H1 (cell line): ENCODE measurements at regions of chr17 and their contacts with region 1.

Region 1: GRCh38 chr17:7403977-7404736 is at the start of gene TMEM256:
- DNase-seq: peak; percentile 96 to 99
- H3K4me3 ChIP-seq: peak within 1 kb of the TSS; percentile 72 to 94 (median 81)
- H3K27ac ChIP-seq: peak within 1 kb of the TSS; percentile 81; the same call in 1 of the 2 replicates
- H3K4me1 ChIP-seq: peaks cover 0 to 15% (median 11%) of the 10 kb centered on the region in 4 experiments; a peak in 5 of 7 replicates
- H3K27me3 ChIP-seq: no peaks in the 10 kb centered on the region; a peak in 1 of 7 replicates
- CTCF ChIP-seq: no peak
- EP300 ChIP-seq: no peak
- POLR2A ChIP-seq: peak in 1 of 2 experiments; percentile 74; a peak in 2 of 3 replicates
- RAD21 ChIP-seq: no peak
- total RNA-seq, gene TMEM256: 97.0 and 104 TPM in 2 replicates

Region 2: DNA sequence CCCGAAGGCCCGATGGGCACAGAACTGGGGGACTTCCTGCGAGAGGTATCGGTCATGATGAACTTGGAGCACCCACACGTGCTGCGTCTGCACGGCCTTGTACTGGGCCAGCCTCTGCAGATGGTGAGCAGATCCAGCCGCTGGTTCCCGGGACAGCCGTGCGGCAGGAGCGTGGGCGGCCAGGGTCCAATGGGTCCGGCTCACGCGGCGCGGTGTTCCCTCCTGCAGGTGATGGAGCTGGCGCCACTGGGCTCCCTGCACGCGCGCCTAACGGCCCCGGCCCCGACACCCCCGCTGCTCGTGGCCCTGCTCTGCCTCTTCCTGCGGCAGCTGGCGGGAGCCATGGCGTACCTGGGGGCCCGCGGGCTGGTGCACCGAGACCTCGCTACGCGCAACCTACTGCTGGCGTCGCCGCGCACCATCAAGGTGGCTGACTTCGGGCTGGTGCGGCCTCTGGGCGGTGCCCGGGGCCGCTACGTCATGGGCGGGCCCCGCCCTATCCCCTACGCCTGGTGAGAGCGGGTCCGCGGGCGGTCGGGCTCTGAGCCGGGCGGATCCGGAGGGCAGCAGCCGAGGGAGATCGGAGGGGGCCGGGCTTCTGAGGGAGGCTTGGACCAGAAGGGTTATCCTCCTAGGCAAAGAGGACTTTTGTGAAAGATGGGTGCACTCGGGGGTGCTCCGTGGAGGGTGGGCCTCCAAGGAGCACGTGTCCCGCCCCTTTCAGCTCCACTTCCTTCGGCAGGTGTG is 20.2 kb before region 1 on chr17:
- CTCF ChIA-PET with region 1: interaction called, 4 read pairs
- POLR2A ChIA-PET with region 1: interaction called, 12 read pairs
- DNase-seq: peak in 1 of 2 experiments; percentile 92
- H3K4me3 ChIP-seq: peak overlapping the region; percentile 36 to 60 (median 46)
- H3K27ac ChIP-seq: no peak overlapping the region
- H3K4me1 ChIP-seq: peaks cover 0 to 17% (median 10%) of the 10 kb centered on the region in 4 experiments; a peak in 6 of 7 replicates
- H3K27me3 ChIP-seq: peaks cover 0 to 39% (median 29%) of the 10 kb centered on the region in 4 experiments; a peak in 6 of 7 replicates
- CTCF ChIP-seq: no peak
- EP300 ChIP-seq: no peak
- POLR2A ChIP-seq: peak in 1 of 2 experiments; percentile 28; a peak in 1 of 3 replicates
- RAD21 ChIP-seq: no peak

Region 3: GRCh38 chr17:7419819-7420610 is 15.9 kb after region 1 on chr17 and contains the start of gene SPEM1:
- CTCF ChIA-PET with region 1: interaction called, 15 read pairs
- POLR2A ChIA-PET with region 1: interaction called, 14 read pairs
- DNase-seq: no peak
- H3K4me3 ChIP-seq: no peak within 1 kb of the TSS
- H3K27ac ChIP-seq: no peak within 1 kb of the TSS
- H3K4me1 ChIP-seq: peaks cover 0 to 15% (median 2%) of the 10 kb centered on the region in 4 experiments; a peak in 4 of 7 replicates
- H3K27me3 ChIP-seq: no peaks in the 10 kb centered on the region
- CTCF ChIP-seq: no peak
- EP300 ChIP-seq: no peak
- POLR2A ChIP-seq: no peak
- RAD21 ChIP-seq: no peak
- total RNA-seq, gene SPEM1: not detected in 2 replicates